MCF 10A (cell line): ENCODE measurements at regions of chr2 and their contacts with region 1.

Region 1: DNA sequence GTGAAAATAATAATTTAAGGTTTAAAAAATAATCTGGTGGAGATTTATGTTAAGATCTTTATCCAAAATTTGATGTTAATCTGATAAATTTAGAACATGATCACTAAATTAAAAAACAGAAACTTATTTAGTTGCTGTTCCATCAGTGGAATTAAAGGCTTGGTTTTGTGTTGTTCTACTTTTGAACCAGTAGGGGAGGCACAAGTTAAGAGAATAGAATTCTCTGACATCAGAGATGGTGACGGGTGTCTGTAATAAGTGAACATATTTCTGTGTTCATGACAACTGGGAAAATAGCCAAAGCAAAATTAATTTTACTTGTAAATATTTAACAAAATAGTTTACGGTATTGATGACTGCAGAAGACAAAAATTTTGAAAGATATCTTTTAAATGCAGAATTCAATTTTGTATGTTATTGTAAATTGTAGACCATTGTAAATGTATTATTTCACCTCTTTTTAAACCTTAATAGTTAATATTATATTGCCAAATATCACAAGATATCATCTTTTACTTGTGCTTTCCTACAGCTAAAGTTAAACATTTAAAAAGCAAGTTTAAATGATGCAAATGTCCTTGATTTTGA is 106.0 kb downstream of the UBR3 start:
- DNase-seq: peak; percentile 48
- H3K4me3 Mint-ChIP-seq: no peak overlapping the region
- H3K27ac Mint-ChIP-seq: no peak overlapping the region
- H3K4me1 Mint-ChIP-seq: no peaks in the 10 kb centered on the region
- H3K27me3 Mint-ChIP-seq: no peaks in the 10 kb centered on the region
- CTCF ChIP-seq: peak; percentile 52

Region 2: DNA sequence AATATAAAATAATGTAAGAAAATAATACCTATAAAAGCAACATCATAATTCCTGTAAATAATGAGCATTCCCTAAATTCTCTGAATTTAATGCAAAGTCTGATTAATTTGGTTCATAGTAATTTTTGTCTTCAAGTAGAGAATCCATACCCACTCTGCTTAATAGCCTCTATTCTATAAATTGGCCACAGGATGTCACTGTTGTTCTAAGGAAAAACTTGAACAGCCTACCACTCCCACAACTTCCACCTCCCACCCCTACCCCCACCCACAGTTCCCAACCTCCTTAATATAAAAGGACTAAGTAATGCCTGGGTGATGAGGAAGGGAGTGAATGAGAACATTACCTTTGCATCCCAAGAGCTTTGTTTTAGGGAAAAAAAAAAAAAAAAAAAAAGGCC is 481.1 kb before region 1 on chr2:
- CTCF ChIA-PET with region 1: interaction called, 3 read pairs
- POLR2A ChIA-PET with region 1: no interaction called
- intact Hi-C with region 1: loop called (anchors 2 kb)
- DNase-seq: peak; percentile 65
- H3K4me3 Mint-ChIP-seq: no peak overlapping the region
- H3K27ac Mint-ChIP-seq: no peak overlapping the region
- H3K4me1 Mint-ChIP-seq: no peaks in the 10 kb centered on the region
- H3K27me3 Mint-ChIP-seq: peaks cover 11% of the 10 kb centered on the region
- CTCF ChIP-seq: peak; percentile 61

Region 3: GRCh38 chr2:169528271-169528701 is 404.9 kb before region 1 on chr2:
- CTCF ChIA-PET with region 1: interaction called, 3 read pairs
- POLR2A ChIA-PET with region 1: no interaction called
- intact Hi-C with region 1: loop called (anchors 5 kb)
- DNase-seq: peak; percentile 70
- H3K4me3 Mint-ChIP-seq: no peak overlapping the region
- H3K27ac Mint-ChIP-seq: no peak overlapping the region
- H3K4me1 Mint-ChIP-seq: no peaks in the 10 kb centered on the region
- H3K27me3 Mint-ChIP-seq: no peaks in the 10 kb centered on the region
- CTCF ChIP-seq: peak; percentile 72

Region 4: DNA sequence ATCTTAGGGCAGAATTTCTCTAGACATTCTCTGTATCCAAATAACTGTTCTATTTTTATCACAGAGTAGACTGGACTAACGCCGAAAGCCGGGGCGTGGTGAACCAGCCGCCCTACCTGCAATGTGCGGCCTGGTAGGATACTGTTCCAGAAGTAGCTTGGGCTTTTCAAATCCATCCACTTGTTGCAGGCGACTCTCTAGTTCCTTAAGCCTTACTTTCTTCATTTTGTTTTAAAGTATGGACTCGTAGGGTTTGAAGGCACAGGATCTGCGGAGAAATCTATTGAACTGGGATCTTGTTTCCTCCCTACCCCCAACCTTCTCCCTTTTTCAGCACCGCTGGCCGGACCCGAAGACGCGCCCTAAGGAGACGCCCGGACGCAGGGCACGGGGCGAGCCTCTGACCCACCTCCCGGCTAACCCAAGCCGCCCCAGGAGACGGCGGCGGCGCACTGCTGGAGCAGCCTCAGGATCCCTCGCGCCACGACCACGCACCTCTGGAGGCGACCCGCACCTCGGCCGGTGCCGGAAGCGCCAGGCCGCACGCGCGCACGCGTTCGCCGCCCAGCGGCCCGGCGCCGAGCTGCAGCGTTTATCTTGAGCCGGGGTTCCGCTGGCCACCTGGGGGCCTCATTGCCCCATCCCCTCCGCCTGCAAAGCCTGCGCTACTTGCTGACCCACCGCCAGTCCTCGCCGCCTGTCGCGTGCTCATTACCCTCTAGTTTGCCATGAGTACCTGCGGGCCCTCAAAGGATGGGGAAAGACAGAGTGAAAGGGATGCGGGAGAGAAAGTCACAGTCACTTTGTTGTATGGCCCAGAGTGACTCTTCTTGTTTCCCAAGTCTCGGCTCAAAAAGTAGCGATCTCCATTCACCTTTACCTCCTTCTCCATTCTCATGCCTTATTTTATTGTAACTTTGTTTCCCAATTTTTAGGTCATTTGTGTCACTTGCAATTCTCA is 108.6 kb before region 1 on chr2 and contains the start of gene METTL5:
- CTCF ChIA-PET with region 1: interaction called, 5 read pairs
- POLR2A ChIA-PET with region 1: interaction called, 14 read pairs
- intact Hi-C with region 1: loop called (anchors 1 kb)
- DNase-seq: peak; percentile 83
- H3K4me3 Mint-ChIP-seq: peak within 1 kb of the TSS; percentile 81
- H3K27ac Mint-ChIP-seq: peak within 1 kb of the TSS; percentile 89
- H3K4me1 Mint-ChIP-seq: peaks cover 38% of the 10 kb centered on the region
- H3K27me3 Mint-ChIP-seq: no peaks in the 10 kb centered on the region
- CTCF ChIP-seq: peak; percentile 99
- total RNA-seq, gene METTL5: 68.0 and 109 TPM in 2 replicates

Region 5: DNA sequence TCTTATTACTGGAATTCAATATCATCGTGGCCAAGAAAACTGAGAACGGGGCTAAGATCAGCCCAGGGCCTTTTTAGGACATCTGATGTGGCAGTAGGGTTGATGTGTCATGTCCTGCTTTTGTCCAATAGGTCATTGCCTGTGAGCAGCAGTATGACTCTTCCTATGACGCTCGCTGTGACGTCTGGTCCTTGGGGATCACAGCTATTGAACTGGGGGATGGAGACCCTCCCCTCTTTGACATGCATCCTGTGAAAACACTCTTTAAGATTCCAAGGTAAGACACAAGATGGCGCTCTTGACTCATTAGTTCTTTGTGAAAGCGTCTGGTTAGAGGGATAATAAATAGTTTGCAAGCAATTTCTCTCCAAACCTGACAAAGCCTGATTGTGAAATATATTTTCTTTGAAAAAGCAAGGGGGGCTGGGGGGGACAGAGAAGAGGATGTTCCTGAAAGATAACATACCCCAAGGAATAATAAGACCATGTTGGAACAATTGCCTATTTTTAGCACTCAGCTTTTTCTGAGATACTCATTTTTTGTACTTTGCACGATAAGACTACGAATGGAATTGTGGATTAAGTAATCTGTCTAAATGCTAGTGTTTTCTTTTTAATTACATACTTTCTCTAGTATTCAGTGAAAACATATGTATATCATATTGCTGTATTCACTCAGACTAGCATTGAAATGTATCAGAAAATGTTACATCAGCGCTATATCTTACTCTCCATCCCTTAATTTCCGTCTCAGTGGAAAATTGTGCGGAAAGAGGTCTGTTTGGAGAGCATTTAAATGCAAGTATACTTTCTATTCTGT is 302.9 kb after region 1 on chr2:
- CTCF ChIA-PET with region 1: interaction called, 3 read pairs
- POLR2A ChIA-PET with region 1: no interaction called
- intact Hi-C with region 1: loop called (anchors 2 kb)
- DNase-seq: peak; percentile 70
- H3K4me3 Mint-ChIP-seq: no peak overlapping the region
- H3K27ac Mint-ChIP-seq: no peak overlapping the region
- H3K4me1 Mint-ChIP-seq: no peaks in the 10 kb centered on the region
- H3K27me3 Mint-ChIP-seq: peaks cover 41% of the 10 kb centered on the region
- CTCF ChIP-seq: peak; percentile 60

Region 6: DNA sequence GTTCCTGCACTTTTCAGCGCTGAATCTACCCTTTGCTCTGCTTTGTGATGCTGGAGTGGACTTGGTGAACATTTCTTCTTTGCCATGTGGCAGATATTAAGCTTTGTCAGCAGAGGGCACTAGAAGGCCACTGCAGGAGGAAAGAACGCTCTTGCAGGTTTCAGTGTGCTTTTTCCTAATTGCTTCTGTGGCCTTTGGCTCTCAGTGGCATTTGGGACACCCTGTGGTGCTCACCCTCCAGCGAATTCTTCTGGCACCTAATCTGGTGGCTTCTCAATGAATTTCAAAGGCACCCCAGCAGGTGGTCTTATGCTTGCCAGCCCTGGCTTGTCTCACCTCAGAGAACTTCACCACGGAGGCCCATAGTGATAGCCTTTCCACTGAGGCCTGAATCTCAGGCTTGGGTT is 391.4 kb after region 1 on chr2:
- CTCF ChIA-PET with region 1: no interaction called
- POLR2A ChIA-PET with region 1: no interaction called
- intact Hi-C with region 1: loop called (anchors 1 kb)
- DNase-seq: peak; percentile 58
- H3K4me3 Mint-ChIP-seq: no peak overlapping the region
- H3K27ac Mint-ChIP-seq: no peak overlapping the region
- H3K4me1 Mint-ChIP-seq: no peaks in the 10 kb centered on the region
- H3K27me3 Mint-ChIP-seq: no peaks in the 10 kb centered on the region
- CTCF ChIP-seq: peak; percentile 63

Region 7: GRCh38 chr2:170361090-170361936 is 428.1 kb after region 1 on chr2:
- CTCF ChIA-PET with region 1: no interaction called
- POLR2A ChIA-PET with region 1: no interaction called
- intact Hi-C with region 1: loop called (anchors 5 kb)
- DNase-seq: peak; percentile 77
- H3K4me3 Mint-ChIP-seq: no peak overlapping the region
- H3K27ac Mint-ChIP-seq: no peak overlapping the region
- H3K4me1 Mint-ChIP-seq: peaks cover 7% of the 10 kb centered on the region
- H3K27me3 Mint-ChIP-seq: peaks cover 58% of the 10 kb centered on the region
- CTCF ChIP-seq: peak; percentile 76